Cardiac septum (tissue), 1 donor: ENCODE measurements at regions of chr12 and their contacts with region 1.

Region 1: GRCh38 chr12:109995686-109996482 is at the start of gene GIT2:
- DNase-seq: peak; percentile 97
- total RNA-seq, gene GIT2: 31.2 TPM

Region 2: GRCh38 chr12:109899783-109900751 is 95.8 kb before region 1 on chr12 and contains the start of gene TCHP:
- intact Hi-C with region 1: loop called (anchors 5 kb)
- DNase-seq: peak; percentile 94
- total RNA-seq, gene TCHP: 9.3 TPM

Region 3: DNA sequence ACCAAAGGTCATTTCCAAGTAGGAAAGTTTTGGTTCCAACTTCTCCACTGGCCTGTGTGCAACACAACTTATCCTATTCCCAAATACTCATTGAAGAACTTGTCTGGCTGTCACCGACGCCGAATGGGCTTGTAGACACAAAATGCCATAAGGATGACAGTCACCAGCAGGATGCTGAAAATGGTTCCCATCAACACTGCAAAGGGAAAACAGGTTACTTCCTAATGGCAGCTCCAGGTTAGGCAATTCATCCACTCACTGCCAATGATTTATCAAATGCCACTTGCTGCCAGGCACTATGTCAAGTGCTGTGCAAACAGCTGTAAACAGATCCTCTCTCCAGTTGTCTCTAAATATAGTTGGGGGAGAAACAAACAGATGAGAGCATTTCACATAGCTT is 46.4 kb after region 1 on chr12:
- intact Hi-C with region 1: loop called (anchors 5 kb)
- DNase-seq: peak; percentile 26